ENCODE measurements at regions of chr9 and their contacts with region 1.

Region 1: DNA sequence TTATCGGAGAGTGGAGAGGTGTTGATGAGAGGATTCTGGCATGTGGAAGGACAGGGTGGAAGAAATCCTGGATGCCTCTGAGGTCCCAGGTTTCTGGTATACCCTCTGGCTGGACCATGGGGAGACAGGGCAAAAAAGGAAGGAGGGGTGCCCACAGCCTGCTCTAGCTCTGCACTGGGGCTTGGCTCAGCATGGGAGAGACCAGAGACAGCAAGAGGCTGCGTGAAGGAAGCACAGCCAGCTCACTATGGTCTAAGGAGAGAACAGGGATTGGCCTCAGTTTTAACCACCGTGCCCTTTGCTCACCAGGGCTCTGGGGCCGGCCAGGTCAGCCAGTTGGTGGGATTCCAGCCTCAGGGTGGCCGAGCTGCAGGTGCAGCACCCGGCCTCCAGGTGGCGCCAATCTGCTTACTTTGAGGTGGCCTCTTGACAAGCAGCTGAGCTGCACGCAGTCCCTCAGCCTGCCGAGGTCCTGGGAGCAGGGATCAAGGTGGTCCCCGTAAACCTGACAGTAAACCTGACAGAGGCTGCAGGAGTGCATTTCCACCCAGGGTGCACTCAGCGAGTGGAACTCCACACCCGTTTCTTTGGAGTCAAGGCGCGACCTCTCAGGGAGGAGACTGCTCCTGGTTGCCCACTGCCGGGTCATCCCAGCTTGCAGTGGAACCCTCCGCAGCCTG is 25.0 kb upstream of the SPTLC1 start:
- DNase-seq: peak; percentile 91

Region 2: DNA sequence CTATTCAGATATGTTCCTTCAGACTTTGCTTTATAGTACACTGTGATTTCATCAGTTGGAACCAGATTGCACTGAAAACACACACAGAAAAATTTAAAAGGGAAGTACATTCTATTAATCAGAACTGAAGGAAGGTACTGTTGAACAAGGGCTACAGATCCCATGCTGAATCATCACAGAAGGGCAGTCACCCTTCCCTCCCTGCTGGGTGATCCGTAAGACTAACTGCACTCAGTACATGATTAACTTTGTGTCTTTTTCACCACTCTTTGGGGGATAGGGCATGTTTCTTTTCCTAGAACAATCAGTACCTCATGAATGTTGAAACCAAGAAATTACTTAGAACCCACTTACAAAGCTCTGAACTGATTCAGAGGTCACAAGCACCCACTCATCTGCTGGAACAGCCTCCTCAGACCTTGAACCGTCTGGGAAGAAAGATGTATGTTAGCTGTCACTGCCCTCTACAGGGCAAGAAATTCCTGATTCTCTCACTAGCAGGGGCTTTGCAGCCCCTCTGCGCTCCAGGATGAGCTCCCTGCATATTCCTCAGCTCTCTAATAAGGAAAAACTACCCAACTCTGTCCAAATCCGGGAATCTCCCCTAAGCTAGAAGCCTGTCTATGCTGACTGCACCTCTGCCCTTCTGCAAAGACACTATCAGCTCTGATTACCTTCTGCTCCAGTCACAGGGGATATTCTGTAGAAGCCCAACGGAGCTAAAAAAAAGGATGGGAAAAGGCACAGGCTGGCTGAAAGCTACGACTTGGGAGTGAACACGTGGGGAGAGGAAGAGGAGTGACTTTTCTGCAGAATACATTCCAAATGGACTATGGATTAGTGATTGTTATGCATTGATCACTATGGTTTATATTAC is 102.3 kb after region 1 on chr9:
- intact Hi-C with region 1: loop called (anchors 5 kb)
- DNase-seq: no peak

Region 3: DNA sequence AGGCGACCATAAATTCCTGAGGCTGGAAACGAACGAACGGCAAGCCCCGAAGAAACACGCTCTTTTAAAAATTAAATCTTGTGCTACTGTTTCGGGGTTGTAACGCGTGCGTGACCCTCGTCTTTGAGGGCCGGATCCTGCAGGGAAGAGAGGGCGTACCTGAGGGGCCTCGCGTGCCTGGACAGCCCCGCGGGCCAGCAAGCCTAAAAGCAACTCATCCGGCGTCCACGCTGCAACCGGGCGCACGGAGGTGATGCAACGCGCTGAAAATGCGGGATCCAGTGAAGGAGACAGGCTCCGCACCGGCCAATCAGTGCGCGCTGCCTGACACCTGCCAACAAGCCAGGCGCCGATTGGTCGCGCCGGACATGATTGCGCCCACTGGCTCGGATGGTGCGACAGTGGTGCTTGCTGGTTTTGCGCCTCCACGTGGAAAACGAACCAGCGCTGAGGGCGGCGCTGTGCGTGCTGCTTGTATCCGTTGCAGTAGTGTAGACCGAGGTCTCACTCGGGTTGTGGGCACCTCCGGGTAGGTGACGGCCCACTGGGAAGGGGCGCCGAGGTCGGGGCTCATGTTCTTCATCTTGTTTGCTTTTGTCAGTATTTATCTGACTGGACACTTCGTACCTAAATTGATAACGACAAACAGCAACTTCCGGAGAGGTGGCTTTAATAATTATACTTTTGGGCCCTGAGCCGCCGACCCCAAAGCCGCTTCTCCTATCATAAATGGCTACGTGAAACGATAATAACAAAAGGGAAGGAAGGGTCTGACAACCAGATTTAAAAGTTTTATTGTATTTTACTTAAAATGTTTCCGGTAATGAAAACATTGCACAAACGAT is 153.5 kb after region 1 on chr9 and contains the start of gene IARS1:
- intact Hi-C with region 1: no loop called
- DNase-seq: peak; percentile 99
- total RNA-seq, gene IARS1: 69.5 TPM